HEK293T (cell line): ENCODE measurements at regions of chr3 and their contacts with region 1.

Region 1: GRCh38 chr3:168213920-168214319 is 118.2 kb upstream of the GOLIM4 start:
- DNase-seq: no peak

Region 2: GRCh38 chr3:168847291-168847883 is 633.5 kb after region 1 on chr3:
- CTCF ChIA-PET with region 1: interaction called, 13 read pairs
- POLR2A ChIA-PET with region 1: no interaction called
- DNase-seq: peak; percentile 29